Right ventricle myocardium superior (tissue), 1 donor: ENCODE measurements at regions of chr7 and their contacts with region 1.

Region 1: GRCh38 chr7:131554880-131555516 is 1.4 kb downstream of the PODXL start:
- DNase-seq: no peak
- ATAC-seq: no peak

Region 2: DNA sequence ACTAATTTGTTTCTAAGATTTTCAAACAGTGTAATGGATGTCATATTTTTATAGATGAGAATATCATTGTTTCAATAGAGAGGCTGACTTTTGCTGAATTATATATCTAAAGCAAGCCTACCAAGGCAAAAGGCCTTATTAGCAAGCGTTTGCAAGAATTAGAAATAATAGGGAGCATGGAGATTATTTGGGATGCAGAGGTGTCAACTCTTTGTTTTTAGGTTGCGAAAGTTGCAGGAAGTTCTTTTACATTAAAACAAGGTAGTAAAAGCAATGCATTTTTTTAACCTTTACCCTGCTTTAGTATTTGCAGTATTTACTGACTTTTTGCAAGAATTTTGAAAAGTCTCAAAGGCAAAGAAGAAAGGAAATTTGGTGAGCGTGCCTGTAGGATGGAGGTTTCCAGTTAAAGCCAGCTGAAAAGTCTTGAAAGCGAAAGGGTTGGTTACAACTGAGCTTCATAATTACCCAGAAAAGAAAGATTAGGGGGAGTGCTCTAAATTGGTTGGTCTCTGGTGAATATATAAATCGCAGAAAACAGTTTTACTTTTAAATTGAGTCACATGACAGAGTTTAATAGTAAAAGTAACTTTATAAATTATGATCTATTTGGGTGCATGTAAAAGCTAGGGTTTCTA is 145.8 kb before region 1 on chr7:
- intact Hi-C with region 1: no loop called
- DNase-seq: no peak
- ATAC-seq: no peak

Region 3: DNA sequence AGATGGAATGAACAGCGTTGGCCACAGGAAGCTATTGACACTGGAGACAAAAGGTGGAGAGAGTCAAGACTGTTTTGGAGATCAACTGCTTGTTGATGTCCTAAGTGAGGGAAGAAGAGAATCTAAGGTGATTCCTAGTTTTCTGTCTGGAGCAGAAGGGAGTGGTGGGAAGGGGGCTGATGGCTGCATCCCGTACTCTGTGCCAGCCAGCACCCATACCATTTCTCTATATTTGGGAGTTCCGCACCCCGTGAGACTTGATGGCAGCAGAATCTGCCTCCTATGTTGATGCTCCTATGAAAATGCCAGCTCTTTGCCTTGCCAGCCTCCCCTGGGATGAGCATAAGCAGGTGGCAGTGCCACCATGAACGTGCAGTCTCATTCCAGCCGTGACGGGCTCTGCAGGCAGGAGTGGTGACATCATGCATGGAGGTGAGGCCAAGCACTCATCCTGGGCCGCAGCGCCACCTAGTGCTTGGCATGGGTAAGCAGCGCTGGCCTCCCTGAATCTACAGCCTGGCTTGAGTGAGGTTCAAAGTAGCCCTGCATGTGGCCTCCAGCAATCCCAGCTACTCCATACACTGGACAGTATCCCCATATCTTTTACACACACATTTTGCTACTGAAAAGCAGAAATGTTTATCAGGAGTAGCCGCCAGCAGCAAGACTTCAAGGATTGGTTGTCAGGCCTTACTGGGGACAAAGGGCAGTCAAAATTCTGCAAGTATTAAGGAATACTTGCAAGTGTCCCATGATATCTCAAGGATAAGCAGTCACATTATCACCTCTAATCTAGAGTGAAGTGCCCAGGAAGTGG is 41.5 kb before region 1 on chr7:
- intact Hi-C with region 1: loop called (anchors 5 kb)
- DNase-seq: peak; percentile 91
- ATAC-seq: peak; percentile 94